CD8-positive, alpha-beta memory T cell (primary cell): ENCODE measurements at regions of chr3 and their contacts with region 1.

Region 1: DNA sequence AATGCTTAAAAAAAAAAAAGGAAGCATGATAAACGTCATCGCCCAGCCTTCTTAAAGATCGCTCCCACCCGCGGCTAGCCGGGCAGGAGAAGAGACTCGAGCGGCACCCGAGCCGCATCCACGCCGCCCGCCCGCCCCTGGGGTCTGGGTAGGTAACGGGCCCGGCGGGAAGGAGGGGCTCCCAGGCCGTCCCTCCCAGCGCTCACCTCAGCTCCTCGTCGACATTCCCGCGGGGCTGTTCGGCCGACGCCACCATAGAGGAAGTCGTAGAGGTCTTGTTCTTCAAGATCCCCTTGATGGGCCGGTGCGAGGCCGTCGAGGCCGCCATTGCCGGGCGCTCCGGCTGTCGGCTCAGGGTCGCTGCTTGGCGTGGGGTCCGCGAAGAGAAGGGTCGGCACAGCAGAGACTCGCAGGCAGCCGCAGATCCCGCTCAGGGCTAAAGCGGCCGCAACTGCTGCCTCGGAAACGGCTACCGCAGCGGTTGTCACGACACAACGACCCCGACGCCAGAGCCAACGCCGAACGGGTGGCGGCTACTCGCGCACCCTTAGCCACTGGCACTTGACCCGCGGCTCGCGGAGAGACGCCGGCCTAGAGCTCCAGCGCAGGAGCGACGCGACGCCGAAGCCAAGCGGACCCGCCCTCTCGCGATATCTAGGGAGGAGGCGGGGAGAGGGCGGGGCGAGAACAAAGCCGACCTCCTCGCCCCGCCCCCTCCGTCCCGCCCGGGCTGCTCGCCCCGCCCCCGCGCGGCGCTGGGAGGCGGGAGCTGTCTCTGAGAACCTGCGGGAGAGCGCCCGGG is at the start of gene PPP1R2:
- DNase-seq: peak; percentile 89 to 93 (median 92)
- H3K4me3 ChIP-seq: peak within 1 kb of the TSS; percentile 85
- H3K4me3 Mint-ChIP-seq: peak within 1 kb of the TSS; percentile 85 to 98 (median 95)
- H3K27ac ChIP-seq: peak within 1 kb of the TSS; percentile 88
- H3K27ac Mint-ChIP-seq: peak within 1 kb of the TSS; percentile 84 to 99 (median 95)
- H3K4me1 ChIP-seq: peaks cover 71% of the 10 kb centered on the region
- H3K4me1 Mint-ChIP-seq: peaks cover 75 to 82% (median 81%) of the 10 kb centered on the region in 3 donors
- H3K27me3 ChIP-seq: no peaks in the 10 kb centered on the region
- H3K27me3 Mint-ChIP-seq: no peaks in the 10 kb centered on the region
- total RNA-seq, gene PPP1R2: 106 to 109 TPM

Region 2: DNA sequence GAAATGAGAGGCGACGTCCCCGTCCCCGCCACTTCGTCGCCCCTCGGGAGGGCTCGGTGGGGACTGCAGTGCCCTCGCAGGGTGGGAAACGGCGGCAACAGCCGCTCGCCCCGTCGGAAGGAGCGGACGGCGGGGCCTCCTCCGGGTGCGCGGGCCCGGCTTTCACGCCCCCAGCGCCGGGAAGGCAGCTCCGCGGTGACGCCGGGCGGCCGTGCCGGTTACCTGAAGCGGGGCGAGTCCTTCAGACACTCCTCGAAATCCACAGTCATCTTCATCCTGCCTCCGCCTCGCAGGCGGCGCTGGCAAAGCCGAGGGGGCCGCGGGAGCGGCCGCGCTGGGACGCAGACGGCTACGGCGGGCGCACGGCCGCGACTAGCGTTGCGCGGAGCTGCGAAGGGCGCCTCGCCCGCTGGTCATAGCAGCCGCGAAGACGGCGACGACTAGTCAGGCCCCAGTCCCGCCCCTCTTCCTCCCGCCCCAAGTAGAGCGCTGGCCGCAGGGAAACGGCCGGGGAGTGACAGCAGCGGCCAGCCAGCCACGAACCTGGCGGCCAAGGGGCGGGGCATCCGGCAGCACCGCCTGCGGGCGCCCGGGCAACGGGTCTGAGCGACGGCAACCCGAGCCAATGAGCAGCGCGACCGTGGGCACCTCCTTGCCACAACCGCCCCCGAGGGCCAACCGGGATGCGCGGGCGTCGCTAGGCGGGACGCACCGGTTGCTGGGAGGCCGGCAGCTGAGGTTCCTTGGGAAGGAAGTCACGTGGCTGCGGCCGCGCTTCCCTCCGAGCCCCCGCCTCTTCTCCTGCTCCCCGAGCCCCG is 100.1 kb before region 1 on chr3 and contains the start of gene ACAP2:
- CTCF ChIA-PET with region 1: interaction called, 3 read pairs
- POLR2A ChIA-PET with region 1: interaction called, 10 read pairs
- DNase-seq: peak; percentile 96 to 99 (median 98)
- H3K4me3 ChIP-seq: peak within 1 kb of the TSS; percentile 79
- H3K4me3 Mint-ChIP-seq: peak within 1 kb of the TSS; percentile 90 to 97 (median 95)
- H3K27ac ChIP-seq: peak within 1 kb of the TSS; percentile 79
- H3K27ac Mint-ChIP-seq: peak within 1 kb of the TSS; percentile 87 to 97 (median 94)
- H3K4me1 ChIP-seq: peaks cover 39% of the 10 kb centered on the region
- H3K4me1 Mint-ChIP-seq: peaks cover 40 to 60% (median 51%) of the 10 kb centered on the region in 3 donors
- H3K27me3 ChIP-seq: no peaks in the 10 kb centered on the region
- H3K27me3 Mint-ChIP-seq: no peaks in the 10 kb centered on the region
- total RNA-seq, gene ACAP2: 39.5 to 42.9 TPM

Region 3: DNA sequence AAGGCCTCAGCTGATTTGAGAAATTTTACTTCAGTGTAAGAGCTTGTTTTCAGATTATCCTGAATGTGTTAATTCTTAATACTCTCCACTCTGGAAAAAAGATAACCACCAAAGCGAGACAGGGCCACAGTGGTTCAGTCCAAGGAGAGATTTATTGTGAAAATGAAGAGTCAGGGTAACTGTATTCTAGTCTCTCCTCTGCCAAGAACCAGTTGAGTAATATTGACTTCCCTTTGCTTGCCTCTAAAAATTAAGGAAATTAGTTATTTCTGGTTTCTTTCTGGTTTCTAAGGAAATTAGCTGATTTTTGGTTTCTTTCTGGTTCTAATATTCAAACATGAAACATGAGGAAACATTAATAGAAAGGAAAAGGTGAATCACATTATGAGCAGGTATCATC is 34.7 kb before region 1 on chr3:
- CTCF ChIA-PET with region 1: no interaction called
- POLR2A ChIA-PET with region 1: no interaction called
- DNase-seq: no peak
- H3K4me3 ChIP-seq: no peak overlapping the region
- H3K4me3 Mint-ChIP-seq: no peak overlapping the region
- H3K27ac ChIP-seq: no peak overlapping the region
- H3K27ac Mint-ChIP-seq: peak overlapping the region in 6 of 8 donors; percentile 3 to 72 (median 33)
- H3K4me1 ChIP-seq: peaks cover 4% of the 10 kb centered on the region
- H3K4me1 Mint-ChIP-seq: peaks cover 11 to 25% (median 24%) of the 10 kb centered on the region in 3 donors
- H3K27me3 ChIP-seq: no peaks in the 10 kb centered on the region
- H3K27me3 Mint-ChIP-seq: no peaks in the 10 kb centered on the region

Region 4: DNA sequence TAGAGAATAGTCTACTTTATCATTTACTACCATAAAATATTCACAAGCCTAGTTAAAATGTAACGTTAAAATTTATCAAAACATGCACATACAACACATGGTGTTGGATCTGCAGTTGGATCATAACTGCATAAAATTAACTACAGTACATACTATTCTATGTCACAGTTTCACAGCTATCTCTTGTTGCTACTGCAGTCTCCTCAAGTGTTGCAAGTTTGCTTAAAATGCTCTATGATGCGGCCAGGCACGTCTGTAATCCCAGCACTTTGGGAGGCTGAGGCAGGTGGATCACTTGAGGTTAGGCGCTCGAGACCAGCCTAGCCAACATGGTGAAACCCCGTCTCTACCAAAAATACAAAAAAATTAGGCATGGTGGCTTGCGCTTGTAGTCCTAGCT is 10.1 kb before region 1 on chr3:
- CTCF ChIA-PET with region 1: interaction called, 3 read pairs
- POLR2A ChIA-PET with region 1: interaction called, 15 read pairs
- DNase-seq: no peak
- H3K4me3 ChIP-seq: no peak overlapping the region
- H3K4me3 Mint-ChIP-seq: peak overlapping the region in 4 of 7 donors; percentile 13 to 70 (median 43)
- H3K27ac ChIP-seq: no peak overlapping the region
- H3K27ac Mint-ChIP-seq: peak overlapping the region in 5 of 8 donors; percentile 0 to 76 (median 47)
- H3K4me1 ChIP-seq: peaks cover 79% of the 10 kb centered on the region
- H3K4me1 Mint-ChIP-seq: peaks cover 75 to 94% (median 88%) of the 10 kb centered on the region in 3 donors
- H3K27me3 ChIP-seq: no peaks in the 10 kb centered on the region
- H3K27me3 Mint-ChIP-seq: no peaks in the 10 kb centered on the region